SK-N-SH (cell line): ENCODE measurements at regions of chr7 and their contacts with region 1.

Region 1: GRCh38 chr7:130721486-130722280 is 12.3 kb downstream of the KLF14 start:
- DNase-seq: peak; percentile 80
- H3K4me3 ChIP-seq: no peak overlapping the region
- H3K27ac ChIP-seq: no peak overlapping the region
- H3K4me1 ChIP-seq: no peaks in the 10 kb centered on the region; a peak in 1 of 4 replicates
- H3K27me3 ChIP-seq: peaks cover 27% of the 10 kb centered on the region; the same call in 1 of the 2 replicates
- CTCF ChIP-seq: peak; percentile 84
- EP300 ChIP-seq: no peak
- RAD21 ChIP-seq: peak; percentile 99

Region 2: DNA sequence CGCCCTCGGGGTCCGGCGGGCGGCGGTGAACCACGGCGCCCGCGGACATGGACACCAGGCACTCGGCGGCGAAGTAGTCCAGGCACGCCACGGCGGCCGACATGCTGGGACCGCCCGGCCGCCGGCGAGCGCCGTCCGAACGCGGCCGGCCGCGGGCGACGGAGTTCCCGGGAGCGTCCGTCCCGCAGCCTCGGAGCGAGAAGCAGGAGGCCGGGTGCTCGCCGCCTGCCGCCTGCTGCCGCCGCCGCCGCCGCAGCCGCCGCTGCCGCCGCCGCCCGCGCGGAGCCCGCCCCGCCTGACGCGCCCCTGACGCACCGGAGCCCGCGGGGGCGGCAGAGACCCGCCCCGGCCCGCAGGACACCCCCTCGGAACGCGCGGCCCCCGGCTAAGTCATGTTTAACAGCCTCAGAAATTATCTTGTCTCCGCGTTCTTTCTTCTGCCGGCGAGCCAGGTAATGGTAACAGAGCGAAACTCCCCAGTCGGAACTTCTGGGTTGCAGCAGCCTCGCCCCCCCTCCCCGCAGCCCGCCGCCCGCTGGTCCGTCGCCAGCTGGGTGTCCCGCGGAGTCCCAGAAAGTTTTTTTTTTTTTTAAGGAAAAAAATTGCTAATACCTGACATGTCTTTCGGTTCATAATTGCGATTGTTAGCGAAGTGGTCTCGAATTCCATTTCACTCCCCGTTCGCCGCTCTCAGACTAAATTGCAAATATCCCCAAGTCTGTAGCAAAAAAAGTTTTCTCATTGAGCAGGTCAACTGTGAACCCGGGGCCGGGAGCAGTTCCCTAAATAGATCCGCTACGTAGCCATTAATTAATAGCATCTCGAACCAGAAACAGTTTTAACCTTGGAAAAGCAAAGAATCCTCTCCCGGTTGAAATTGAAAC is 12.5 kb after region 1 on chr7 and contains the start of gene KLF14:
- CTCF ChIA-PET with region 1: interaction called, 13 read pairs
- POLR2A ChIA-PET with region 1: no interaction called
- DNase-seq: peak; percentile 88
- H3K4me3 ChIP-seq: peak within 1 kb of the TSS; percentile 58 to 63
- H3K27ac ChIP-seq: no peak within 1 kb of the TSS
- H3K4me1 ChIP-seq: peaks cover 0 to 8% of the 10 kb centered on the region in 2 experiments; a peak in 2 of 4 replicates
- H3K27me3 ChIP-seq: peaks cover 86% of the 10 kb centered on the region
- CTCF ChIP-seq: no peak
- EP300 ChIP-seq: no peak
- RAD21 ChIP-seq: no peak
- polyA plus RNA-seq, gene KLF14: 0.02 TPM in 1 of 2 replicates, not detected in the other

Region 3: DNA sequence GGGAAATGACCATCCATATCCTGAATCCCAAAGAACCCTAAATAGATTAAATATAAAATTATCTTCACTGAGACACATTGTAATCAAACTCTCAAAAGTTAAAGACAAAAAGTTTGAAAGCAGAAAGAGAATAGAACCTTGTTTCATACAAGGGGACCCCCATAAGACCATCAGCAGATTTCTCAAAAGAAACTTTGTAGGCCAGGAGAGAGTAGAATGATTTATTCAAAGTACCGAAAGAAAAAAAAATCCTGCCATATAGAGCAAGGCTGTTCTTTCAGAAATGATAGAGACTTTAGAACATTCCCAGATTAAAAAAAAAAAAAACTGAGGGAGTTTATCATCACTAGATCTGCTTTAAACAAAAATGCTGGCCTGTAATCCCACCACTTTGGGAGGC is 47.2 kb after region 1 on chr7:
- CTCF ChIA-PET with region 1: no interaction called
- POLR2A ChIA-PET with region 1: no interaction called
- DNase-seq: no peak
- H3K4me3 ChIP-seq: no peak overlapping the region
- H3K27ac ChIP-seq: no peak overlapping the region
- H3K4me1 ChIP-seq: no peaks in the 10 kb centered on the region
- H3K27me3 ChIP-seq: no peaks in the 10 kb centered on the region
- CTCF ChIP-seq: no peak
- EP300 ChIP-seq: no peak
- RAD21 ChIP-seq: no peak